ENCODE measurements at regions of chr3 and their contacts with region 1.

Region 1: DNA sequence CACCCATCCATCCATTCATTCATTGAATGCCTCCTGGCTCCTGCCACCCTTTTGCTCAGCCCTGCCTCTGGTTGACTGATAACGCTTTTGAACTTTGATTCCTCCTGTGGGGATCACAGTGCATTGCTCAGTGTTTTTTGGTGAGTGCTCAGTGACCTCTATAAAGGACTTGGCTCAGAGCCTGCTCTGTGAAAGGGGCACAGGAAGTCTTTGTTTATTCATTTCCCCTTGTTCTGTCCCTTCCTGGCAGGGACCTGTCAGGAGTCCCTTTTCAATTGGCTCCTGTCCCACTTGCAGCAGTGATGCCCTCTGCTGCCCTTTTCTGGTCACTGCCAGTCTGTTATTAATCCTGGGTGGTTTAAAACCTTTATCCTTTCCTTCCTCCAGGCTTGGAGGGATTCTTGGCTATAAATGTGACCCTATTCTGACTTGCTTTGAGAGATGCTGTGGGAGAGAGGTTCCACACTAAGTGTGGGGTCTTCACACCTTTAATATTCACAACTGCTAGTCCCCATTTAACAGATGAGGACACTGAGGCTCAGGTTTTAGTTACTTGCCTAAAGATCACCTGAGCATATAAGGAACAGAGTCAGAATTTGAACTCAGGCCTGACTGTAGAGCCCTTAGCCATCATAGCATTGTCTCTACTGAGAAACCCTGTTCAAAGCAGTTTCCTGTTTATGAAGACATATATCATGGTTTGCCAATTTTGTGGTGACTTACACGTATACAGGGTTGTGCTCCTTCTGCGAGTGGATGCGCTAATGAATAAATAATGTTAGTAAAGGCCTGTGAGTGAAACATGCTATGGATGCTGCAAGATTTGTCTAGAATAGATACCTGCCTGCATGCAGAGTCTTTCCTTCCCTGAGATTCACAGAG is 23.2 kb upstream of the TATDN2 start:
- DNase-seq: peak; percentile 64 to 78
- ATAC-seq: peak; percentile 84 to 93 (median 90)
- H3K4me3 ChIP-seq: no peak overlapping the region
- H3K27ac ChIP-seq: peak overlapping the region; percentile 6
- H3K4me1 ChIP-seq: peaks cover 5% of the 10 kb centered on the region
- H3K27me3 ChIP-seq: no peaks in the 10 kb centered on the region
- CTCF ChIP-seq: peak; percentile 78

Region 2: GRCh38 chr3:9786825-9787669 is 438.0 kb before region 1 on chr3:
- intact Hi-C with region 1: no loop called
- DNase-seq: no peak
- ATAC-seq: no peak
- H3K4me3 ChIP-seq: no peak overlapping the region
- H3K27ac ChIP-seq: no peak overlapping the region
- H3K4me1 ChIP-seq: peaks cover 12% of the 10 kb centered on the region
- H3K27me3 ChIP-seq: no peaks in the 10 kb centered on the region
- CTCF ChIP-seq: no peak

Region 3: DNA sequence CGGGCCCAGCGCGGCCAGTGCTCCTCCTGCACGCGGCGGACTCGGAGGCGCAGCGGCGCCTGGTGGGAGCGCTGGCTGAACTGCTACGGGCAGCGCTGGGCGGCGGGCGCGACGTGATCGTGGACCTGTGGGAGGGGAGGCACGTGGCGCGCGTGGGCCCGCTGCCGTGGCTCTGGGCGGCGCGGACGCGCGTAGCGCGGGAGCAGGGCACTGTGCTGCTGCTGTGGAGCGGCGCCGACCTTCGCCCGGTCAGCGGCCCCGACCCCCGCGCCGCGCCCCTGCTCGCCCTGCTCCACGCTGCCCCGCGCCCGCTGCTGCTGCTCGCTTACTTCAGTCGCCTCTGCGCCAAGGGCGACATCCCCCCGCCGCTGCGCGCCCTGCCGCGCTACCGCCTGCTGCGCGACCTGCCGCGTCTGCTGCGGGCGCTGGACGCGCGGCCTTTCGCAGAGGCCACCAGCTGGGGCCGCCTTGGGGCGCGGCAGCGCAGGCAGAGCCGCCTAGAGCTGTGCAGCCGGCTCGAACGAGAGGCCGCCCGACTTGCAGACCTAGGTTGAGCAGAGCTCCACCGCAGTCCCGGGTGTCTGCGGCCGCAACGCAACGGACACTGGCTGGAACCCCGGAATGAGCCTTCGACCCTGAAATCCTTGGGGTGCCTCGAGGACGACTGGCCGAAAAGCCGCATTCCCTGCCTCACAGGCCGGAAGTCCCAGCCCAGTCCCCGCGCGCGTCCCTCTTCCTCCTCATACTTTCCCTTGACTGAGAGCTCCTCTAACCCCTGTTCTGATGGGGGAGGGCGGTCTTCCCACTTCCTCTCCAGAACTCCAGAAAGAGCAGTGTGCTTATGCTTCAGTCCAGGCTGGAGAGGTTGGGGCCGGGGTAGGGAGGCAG is 309.5 kb before region 1 on chr3:
- intact Hi-C with region 1: no loop called
- DNase-seq: peak; percentile 76 to 85
- ATAC-seq: peak; percentile 47 to 60 (median 57)
- H3K4me3 ChIP-seq: peak overlapping the region; percentile 80
- H3K27ac ChIP-seq: peak overlapping the region; percentile 81
- H3K4me1 ChIP-seq: peaks cover 12% of the 10 kb centered on the region
- H3K27me3 ChIP-seq: no peaks in the 10 kb centered on the region
- CTCF ChIP-seq: peak; percentile 24

Region 4: DNA sequence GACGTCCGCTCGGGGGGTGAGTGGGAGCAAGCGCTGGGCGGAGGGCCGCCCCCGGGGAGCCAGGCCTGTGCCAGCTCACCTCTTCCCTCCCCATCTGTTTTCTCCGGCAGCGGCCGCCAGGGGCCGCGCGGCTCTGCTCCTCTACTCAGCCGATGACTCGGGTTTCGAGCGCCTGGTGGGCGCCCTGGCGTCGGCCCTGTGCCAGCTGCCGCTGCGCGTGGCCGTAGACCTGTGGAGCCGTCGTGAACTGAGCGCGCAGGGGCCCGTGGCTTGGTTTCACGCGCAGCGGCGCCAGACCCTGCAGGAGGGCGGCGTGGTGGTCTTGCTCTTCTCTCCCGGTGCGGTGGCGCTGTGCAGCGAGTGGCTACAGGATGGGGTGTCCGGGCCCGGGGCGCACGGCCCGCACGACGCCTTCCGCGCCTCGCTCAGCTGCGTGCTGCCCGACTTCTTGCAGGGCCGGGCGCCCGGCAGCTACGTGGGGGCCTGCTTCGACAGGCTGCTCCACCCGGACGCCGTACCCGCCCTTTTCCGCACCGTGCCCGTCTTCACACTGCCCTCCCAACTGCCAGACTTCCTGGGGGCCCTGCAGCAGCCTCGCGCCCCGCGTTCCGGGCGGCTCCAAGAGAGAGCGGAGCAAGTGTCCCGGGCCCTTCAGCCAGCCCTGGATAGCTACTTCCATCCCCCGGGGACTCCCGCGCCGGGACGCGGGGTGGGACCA is 292.0 kb before region 1 on chr3:
- intact Hi-C with region 1: loop called in 1 of 2 experiments (anchors 10 kb)
- DNase-seq: peak; percentile 88 to 93
- ATAC-seq: peak; percentile 81 to 85 (median 82)
- H3K4me3 ChIP-seq: peak overlapping the region; percentile 79
- H3K27ac ChIP-seq: peak overlapping the region; percentile 94
- H3K4me1 ChIP-seq: peaks cover 26% of the 10 kb centered on the region
- H3K27me3 ChIP-seq: no peaks in the 10 kb centered on the region
- CTCF ChIP-seq: peak; percentile 72

Region 5: DNA sequence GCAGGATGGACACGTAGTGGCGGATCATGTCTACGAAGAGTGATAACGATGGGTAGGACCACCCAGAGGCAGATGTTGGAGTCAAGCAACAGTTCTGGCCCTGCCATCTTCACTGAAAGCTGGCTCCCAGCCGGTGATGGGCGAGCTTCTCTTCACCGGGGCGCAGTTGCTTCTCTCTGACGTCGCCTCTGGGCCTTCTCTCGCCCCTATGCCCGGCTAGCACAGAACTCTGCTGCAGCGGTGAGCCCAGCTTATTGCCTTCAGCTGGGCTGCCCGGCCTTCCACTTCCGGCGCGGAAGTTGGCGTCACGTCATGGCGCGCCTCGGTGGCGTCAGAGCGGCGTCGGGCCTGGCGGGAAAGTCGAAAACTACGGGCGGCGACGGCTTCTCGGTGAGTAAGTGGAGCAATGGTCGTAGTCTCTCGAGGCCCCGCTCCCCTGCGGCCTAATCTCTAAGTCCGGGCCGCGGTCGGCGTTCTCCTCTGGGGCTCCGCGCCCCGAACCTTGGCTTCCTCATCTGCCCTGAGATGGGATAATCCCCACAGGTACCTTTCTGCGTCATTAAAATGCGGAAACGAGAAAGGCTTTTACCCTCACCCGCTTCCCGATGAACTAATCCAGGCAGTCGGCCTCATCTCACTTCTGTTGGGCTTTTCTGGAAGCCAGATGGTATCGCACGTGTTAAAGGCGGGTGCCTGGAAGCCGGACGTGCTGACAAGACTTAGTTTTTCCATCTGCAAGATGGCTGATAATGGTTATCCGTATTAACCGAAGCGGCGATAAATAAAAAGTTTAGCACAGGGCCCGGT is 198.7 kb before region 1 on chr3 and contains the start of gene FANCD2:
- intact Hi-C with region 1: loop called in 1 of 2 experiments (anchors 10 kb)
- DNase-seq: peak; percentile 89 to 95
- ATAC-seq: peak; percentile 95 to 99 (median 96)
- H3K4me3 ChIP-seq: peak within 1 kb of the TSS; percentile 78
- H3K27ac ChIP-seq: peak within 1 kb of the TSS; percentile 72
- H3K4me1 ChIP-seq: peaks cover 21% of the 10 kb centered on the region
- H3K27me3 ChIP-seq: no peaks in the 10 kb centered on the region
- CTCF ChIP-seq: no peak
- total RNA-seq, gene FANCD2: 0.39 to 1.0 (median 0.75) TPM

Region 6: DNA sequence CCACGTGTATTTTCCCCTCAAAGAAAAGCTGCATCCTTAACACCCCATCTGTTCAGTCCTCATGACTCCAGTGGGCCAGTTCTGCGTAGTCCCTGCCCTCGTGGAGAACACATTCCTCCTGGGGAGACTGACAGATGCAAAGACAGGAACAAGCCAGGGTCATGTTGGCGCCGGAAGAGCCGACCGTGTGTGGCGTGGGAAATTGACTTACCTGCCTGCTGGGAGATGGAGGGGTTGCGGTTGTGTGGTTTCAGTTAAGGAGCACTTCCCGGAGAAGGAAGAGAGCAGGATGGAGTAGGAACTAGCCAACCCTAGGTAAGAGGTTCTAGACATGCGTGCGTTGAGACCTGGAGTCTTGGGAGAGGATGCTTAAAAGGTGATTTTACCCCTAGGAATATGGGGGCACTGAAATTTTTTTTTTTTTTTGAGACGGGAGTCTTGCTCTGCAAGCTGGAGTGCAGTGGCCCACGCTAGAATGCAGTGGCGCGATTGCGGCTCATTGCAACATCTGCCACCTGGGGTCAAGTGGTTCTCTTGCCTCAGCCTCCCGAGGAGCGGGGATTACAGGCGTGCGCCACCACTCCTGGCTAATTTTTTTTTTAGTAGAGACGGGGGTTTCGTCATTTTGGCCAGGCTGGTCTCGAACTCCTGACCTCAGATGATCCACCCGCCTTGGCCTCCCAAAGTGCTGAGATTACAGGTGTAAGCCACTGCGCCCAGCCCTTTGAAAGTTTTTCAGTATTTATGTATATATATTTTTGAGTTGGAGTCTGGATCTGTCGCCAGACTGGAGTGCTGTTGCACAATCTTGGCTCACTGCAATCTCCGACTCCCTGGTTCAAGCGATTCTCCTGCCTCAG is 82.1 kb before region 1 on chr3:
- intact Hi-C with region 1: loop called in 1 of 2 experiments (anchors 5 kb)
- DNase-seq: no peak
- ATAC-seq: no peak
- H3K4me3 ChIP-seq: peak overlapping the region; percentile 78
- H3K27ac ChIP-seq: peak overlapping the region; percentile 92
- H3K4me1 ChIP-seq: peaks cover 32% of the 10 kb centered on the region
- H3K27me3 ChIP-seq: no peaks in the 10 kb centered on the region
- CTCF ChIP-seq: no peak

Region 7: DNA sequence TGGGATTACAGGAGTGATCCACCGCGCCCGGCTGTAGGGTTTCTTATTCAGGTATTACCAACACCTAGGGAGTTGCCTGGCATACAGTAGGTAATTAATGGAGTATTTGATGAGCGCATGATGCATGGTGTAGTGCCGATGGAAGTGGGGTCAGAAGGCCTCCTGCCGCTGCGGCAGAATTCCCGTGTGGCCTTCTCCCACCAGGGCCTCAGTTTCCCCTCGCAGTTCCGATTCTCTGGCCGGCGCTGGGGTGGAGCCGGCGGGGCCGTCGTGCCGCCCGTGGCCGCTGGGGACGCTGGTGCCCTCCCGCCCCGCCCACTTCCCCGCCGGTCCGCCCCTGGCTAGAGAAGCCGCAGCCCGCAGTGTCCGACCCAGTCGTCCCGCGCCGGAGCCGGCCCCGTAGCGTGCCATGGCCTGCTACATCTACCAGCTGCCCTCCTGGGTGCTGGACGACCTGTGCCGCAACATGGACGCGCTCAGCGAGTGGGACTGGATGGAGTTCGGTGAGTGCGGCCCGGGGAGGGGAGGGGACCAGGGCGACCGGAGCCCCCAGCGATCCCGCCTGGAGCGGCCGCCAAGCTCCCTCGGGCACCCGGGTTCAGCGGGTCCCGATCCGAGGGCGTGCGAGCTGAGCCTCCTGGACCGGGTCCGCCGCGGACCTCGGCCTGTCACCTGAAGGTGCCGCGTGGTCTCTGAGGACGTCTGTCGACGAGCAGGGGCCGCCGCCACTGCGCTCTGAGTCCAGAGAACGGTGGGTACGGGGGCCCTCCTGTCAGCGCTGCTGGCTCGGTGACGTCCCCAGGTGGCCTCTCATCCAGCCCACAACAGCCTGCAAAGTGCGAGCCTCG is 60.3 kb before region 1 on chr3 and contains the start of gene IRAK2:
- intact Hi-C with region 1: loop called (anchors 5 kb)
- DNase-seq: peak; percentile 76 to 89
- ATAC-seq: peak; percentile 92 to 97 (median 96)
- H3K4me3 ChIP-seq: peak within 1 kb of the TSS; percentile 91
- H3K27ac ChIP-seq: peak within 1 kb of the TSS; percentile 83
- H3K4me1 ChIP-seq: no peaks in the 10 kb centered on the region
- H3K27me3 ChIP-seq: no peaks in the 10 kb centered on the region
- CTCF ChIP-seq: peak; percentile 96
- total RNA-seq, gene IRAK2: 3.9 to 21.3 (median 12.8) TPM

Region 8: GRCh38 chr3:10334459-10334858 is 109.4 kb after region 1 on chr3:
- intact Hi-C with region 1: no loop called
- DNase-seq: peak; percentile 65 to 89
- ATAC-seq: peak; percentile 90 to 94 (median 93)
- H3K4me3 ChIP-seq: peak overlapping the region; percentile 11
- H3K27ac ChIP-seq: peak overlapping the region; percentile 87
- H3K4me1 ChIP-seq: peaks cover 19% of the 10 kb centered on the region
- H3K27me3 ChIP-seq: no peaks in the 10 kb centered on the region
- CTCF ChIP-seq: peak; percentile 58